Uterus (tissue), 4 donors: ENCODE measurements at regions of chr16 and their contacts with region 1.

Region 1: GRCh38 chr16:50152807-50153452 is at the start of gene TENT4B:
- DNase-seq: peak; percentile 83 to 86
- H3K4me3 ChIP-seq: peak within 1 kb of the TSS; percentile 80 to 91
- H3K27ac ChIP-seq: peak within 1 kb of the TSS; percentile 96 to 99
- H3K4me1 ChIP-seq: no peaks in the 10 kb centered on the region
- H3K27me3 ChIP-seq: no peaks in the 10 kb centered on the region
- CTCF ChIP-seq: no peak
- POLR2A ChIP-seq: peak; percentile 67 to 92
- total RNA-seq, gene TENT4B: 5.9 to 24.7 (median 12.7) TPM

Region 2: DNA sequence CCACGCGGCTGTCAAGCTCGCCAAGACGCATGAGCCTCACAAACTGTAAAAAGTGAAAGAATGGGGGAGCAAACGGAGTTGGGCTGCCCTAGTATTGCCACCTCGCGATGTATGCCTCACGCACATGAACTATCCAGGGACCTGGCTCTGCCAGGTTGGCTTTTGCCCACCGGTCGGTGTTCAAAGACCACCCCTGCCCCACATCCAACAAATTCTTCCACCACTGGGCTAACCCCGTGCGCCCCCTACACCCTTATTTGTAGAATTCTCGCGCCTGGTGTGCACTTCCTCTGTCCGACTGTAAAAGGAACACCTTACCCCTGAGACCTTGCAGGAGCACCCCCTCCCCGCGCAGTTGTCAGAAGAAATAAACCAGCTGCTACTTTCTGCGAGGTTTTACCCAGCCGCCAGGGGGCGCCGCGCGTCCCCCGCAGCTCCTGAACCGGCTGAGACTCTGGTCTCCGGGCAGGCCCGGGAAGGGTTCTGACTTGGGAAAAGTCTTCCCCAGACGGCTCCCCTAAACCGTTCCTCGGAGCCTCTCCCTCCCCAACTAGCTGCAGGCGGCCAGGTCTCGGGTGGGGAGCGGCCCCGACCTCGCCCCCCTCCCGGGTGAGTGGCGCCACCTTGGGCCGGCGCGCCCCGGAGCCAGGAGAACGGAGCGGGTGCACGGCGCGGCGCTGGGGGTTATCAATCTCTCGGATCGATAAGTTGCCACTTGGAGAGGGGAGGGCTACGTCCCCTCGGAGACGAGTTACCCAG is 295.3 kb before region 1 on chr16:
- intact Hi-C with region 1: no loop called
- DNase-seq: peak; percentile 57 to 59
- H3K4me3 ChIP-seq: peak overlapping the region; percentile 50 to 75
- H3K27ac ChIP-seq: peak overlapping the region; percentile 88 to 98
- H3K4me1 ChIP-seq: peaks cover 0 to 17% of the 10 kb centered on the region in 2 donors
- H3K27me3 ChIP-seq: no peaks in the 10 kb centered on the region
- CTCF ChIP-seq: peak; percentile 56 to 77 (median 75)
- POLR2A ChIP-seq: no peak

Region 3: GRCh38 chr16:49910541-49911071 is 242.3 kb before region 1 on chr16:
- intact Hi-C with region 1: no loop called
- DNase-seq: no peak
- H3K4me3 ChIP-seq: no peak overlapping the region
- H3K27ac ChIP-seq: no peak overlapping the region
- H3K4me1 ChIP-seq: no peaks in the 10 kb centered on the region
- H3K27me3 ChIP-seq: no peaks in the 10 kb centered on the region
- CTCF ChIP-seq: no peak
- POLR2A ChIP-seq: no peak

Region 4: GRCh38 chr16:50209546-50210265 is 56.8 kb after region 1 on chr16:
- intact Hi-C with region 1: loop called (anchors 5 kb)
- DNase-seq: no peak
- H3K4me3 ChIP-seq: no peak overlapping the region
- H3K27ac ChIP-seq: peak overlapping the region; percentile 36 to 38
- H3K4me1 ChIP-seq: peaks cover 8 to 9% of the 10 kb centered on the region in 2 donors
- H3K27me3 ChIP-seq: no peaks in the 10 kb centered on the region
- CTCF ChIP-seq: no peak
- POLR2A ChIP-seq: no peak